Natural killer cell (primary cell): ENCODE measurements at regions of chr3 and their contacts with region 1.

Region 1: GRCh38 chr3:56251343-56251945 is 216.8 kb downstream of the ERC2 start:
- DNase-seq: peak in 1 of 2 donors; percentile 33
- ATAC-seq: no peak
- H3K4me3 ChIP-seq: no peak overlapping the region
- H3K4me3 Mint-ChIP-seq: no peak overlapping the region
- H3K27ac ChIP-seq: no peak overlapping the region
- H3K27ac Mint-ChIP-seq: no peak overlapping the region
- H3K4me1 ChIP-seq: no peaks in the 10 kb centered on the region
- H3K4me1 Mint-ChIP-seq: no peaks in the 10 kb centered on the region
- H3K27me3 ChIP-seq: no peaks in the 10 kb centered on the region
- H3K27me3 Mint-ChIP-seq: peaks cover 5 to 7% of the 10 kb centered on the region in 2 donors
- CTCF ChIP-seq: peak; percentile 42

Region 2: GRCh38 chr3:54859184-54859583 is 1392.3 kb before region 1 on chr3:
- intact Hi-C with region 1: loop called (anchors 5 kb)
- DNase-seq: no peak
- ATAC-seq: no peak
- H3K4me3 ChIP-seq: no peak overlapping the region
- H3K4me3 Mint-ChIP-seq: no peak overlapping the region
- H3K27ac ChIP-seq: no peak overlapping the region
- H3K27ac Mint-ChIP-seq: no peak overlapping the region
- H3K4me1 ChIP-seq: no peaks in the 10 kb centered on the region
- H3K4me1 Mint-ChIP-seq: no peaks in the 10 kb centered on the region
- H3K27me3 ChIP-seq: no peaks in the 10 kb centered on the region
- H3K27me3 Mint-ChIP-seq: no peaks in the 10 kb centered on the region
- CTCF ChIP-seq: no peak

Region 3: DNA sequence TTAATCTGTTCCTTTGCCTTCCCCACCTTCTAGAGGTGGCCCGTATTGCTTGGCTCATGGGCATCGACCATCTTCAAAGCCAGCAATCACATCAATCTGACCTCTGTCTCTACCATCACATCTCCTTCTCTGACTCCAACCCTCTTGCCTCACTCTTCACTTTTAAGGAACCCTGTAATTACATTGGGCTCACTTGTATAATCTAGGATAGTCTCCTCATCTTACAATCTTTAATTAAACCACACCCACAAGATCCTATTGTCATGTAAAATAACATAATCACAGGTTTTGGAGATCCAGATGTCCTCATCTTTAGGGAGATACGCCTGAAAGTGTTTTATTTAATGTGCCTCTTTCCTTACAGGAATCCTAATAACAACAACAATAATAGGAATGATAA is 17.7 kb before region 1 on chr3:
- intact Hi-C with region 1: no loop called
- DNase-seq: no peak
- ATAC-seq: no peak
- H3K4me3 ChIP-seq: no peak overlapping the region
- H3K4me3 Mint-ChIP-seq: no peak overlapping the region
- H3K27ac ChIP-seq: no peak overlapping the region
- H3K27ac Mint-ChIP-seq: no peak overlapping the region
- H3K4me1 ChIP-seq: no peaks in the 10 kb centered on the region
- H3K4me1 Mint-ChIP-seq: no peaks in the 10 kb centered on the region
- H3K27me3 ChIP-seq: no peaks in the 10 kb centered on the region
- H3K27me3 Mint-ChIP-seq: peaks cover 0 to 8% of the 10 kb centered on the region in 2 donors
- CTCF ChIP-seq: no peak

Region 4: DNA sequence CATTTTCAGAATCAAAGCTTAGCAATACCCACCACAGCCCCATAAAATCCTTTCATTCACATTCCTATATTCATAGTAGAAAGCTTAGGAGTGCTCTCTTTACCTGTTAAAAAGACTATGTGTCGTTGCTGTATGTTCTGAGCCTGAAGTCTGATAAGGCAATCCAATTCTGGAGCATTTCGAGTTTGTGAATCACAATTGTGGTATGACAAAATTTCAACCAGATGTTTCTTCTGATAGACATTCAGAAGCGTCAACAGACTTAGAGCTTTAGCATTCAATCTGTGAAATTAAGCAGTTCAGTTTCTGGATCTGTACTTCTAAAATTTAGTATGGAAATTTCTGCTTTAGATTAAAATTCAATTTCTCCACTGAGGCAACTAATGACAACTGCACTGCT is 373.3 kb after region 1 on chr3:
- intact Hi-C with region 1: no loop called
- DNase-seq: no peak
- ATAC-seq: no peak
- H3K4me3 ChIP-seq: no peak overlapping the region
- H3K4me3 Mint-ChIP-seq: no peak overlapping the region
- H3K27ac ChIP-seq: no peak overlapping the region
- H3K27ac Mint-ChIP-seq: peak overlapping the region; percentile 10 to 48
- H3K4me1 ChIP-seq: no peaks in the 10 kb centered on the region
- H3K4me1 Mint-ChIP-seq: peaks cover 5 to 8% of the 10 kb centered on the region in 2 donors
- H3K27me3 ChIP-seq: no peaks in the 10 kb centered on the region
- H3K27me3 Mint-ChIP-seq: no peaks in the 10 kb centered on the region
- CTCF ChIP-seq: no peak